ENCODE measurements at regions of chr19 and their contacts with region 1.

Region 1: GRCh38 chr19:6801485-6802086 is 29.1 kb downstream of the VAV1 start:
- DNase-seq: peak; percentile 54 to 96 (median 87)
- ATAC-seq: peak; percentile 78
- H3K4me3 ChIP-seq: peak overlapping the region; percentile 71 to 79
- H3K4me3 Mint-ChIP-seq: peak overlapping the region; percentile 87
- H3K27ac ChIP-seq: peak overlapping the region; percentile 74 to 91
- H3K27ac Mint-ChIP-seq: peak overlapping the region; percentile 95
- H3K4me1 ChIP-seq: peaks cover 48% of the 10 kb centered on the region
- H3K4me1 Mint-ChIP-seq: peaks cover 68% of the 10 kb centered on the region
- H3K27me3 ChIP-seq: no peaks in the 10 kb centered on the region
- H3K27me3 Mint-ChIP-seq: no peaks in the 10 kb centered on the region
- CTCF ChIP-seq: no peak

Region 2: DNA sequence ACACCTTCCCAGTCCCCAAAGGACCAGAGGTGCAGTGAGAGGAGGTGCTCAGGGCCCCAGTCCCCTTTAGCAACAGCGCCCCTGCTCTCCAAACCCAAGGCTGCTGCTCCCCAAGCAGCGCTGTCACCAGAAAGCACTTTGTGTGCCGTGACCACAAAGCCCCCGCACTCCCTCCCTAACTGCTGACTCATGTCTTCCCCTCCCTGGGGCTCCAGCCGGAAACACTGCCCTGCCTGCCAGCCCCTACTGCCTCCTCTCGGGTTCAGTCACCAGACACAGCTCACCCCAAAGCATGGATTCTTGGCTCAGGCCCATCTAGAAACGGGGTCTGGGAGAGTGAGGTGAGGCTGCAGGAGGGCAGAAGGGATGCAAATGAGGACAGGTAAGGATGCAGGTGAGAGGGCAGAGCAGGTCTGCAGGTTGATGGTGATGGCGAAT is 126.7 kb before region 1 on chr19:
- CTCF ChIA-PET with region 1: no interaction called
- POLR2A ChIA-PET with region 1: no interaction called
- intact Hi-C with region 1: loop called in 1 of 2 experiments (anchors 1 kb)
- DNase-seq: peak; percentile 56 to 93 (median 86)
- ATAC-seq: peak; percentile 67
- H3K4me3 ChIP-seq: peak overlapping the region in 1 of 2 experiments; percentile 31
- H3K4me3 Mint-ChIP-seq: peak overlapping the region; percentile 50
- H3K27ac ChIP-seq: peak overlapping the region in 1 of 2 experiments; percentile 6
- H3K27ac Mint-ChIP-seq: peak overlapping the region; percentile 84
- H3K4me1 ChIP-seq: peaks cover 33% of the 10 kb centered on the region
- H3K4me1 Mint-ChIP-seq: peaks cover 45% of the 10 kb centered on the region
- H3K27me3 ChIP-seq: no peaks in the 10 kb centered on the region
- H3K27me3 Mint-ChIP-seq: no peaks in the 10 kb centered on the region
- CTCF ChIP-seq: no peak

Region 3: GRCh38 chr19:6753178-6754031 is 48.2 kb before region 1 on chr19:
- CTCF ChIA-PET with region 1: no interaction called
- POLR2A ChIA-PET with region 1: no interaction called
- intact Hi-C with region 1: loop called in 1 of 2 experiments (anchors 2 kb)
- DNase-seq: peak; percentile 51 to 89 (median 73)
- ATAC-seq: peak; percentile 90
- H3K4me3 ChIP-seq: peak overlapping the region; percentile 42 to 59
- H3K4me3 Mint-ChIP-seq: peak overlapping the region; percentile 76
- H3K27ac ChIP-seq: peak overlapping the region; percentile 35 to 40
- H3K27ac Mint-ChIP-seq: peak overlapping the region; percentile 81
- H3K4me1 ChIP-seq: peaks cover 4% of the 10 kb centered on the region
- H3K4me1 Mint-ChIP-seq: peaks cover 12% of the 10 kb centered on the region
- H3K27me3 ChIP-seq: no peaks in the 10 kb centered on the region
- H3K27me3 Mint-ChIP-seq: no peaks in the 10 kb centered on the region
- CTCF ChIP-seq: peak; percentile 47

Region 4: GRCh38 chr19:6773323-6773931 is 28.2 kb before region 1 on chr19:
- CTCF ChIA-PET with region 1: interaction called, 4 read pairs
- POLR2A ChIA-PET with region 1: interaction called, 36 read pairs
- intact Hi-C with region 1: loop called (anchors 1 kb)
- DNase-seq: peak in 8 of 9 experiments; percentile 31 to 75 (median 56)
- ATAC-seq: peak; percentile 29
- H3K4me3 ChIP-seq: peak overlapping the region; percentile 99 to 100
- H3K4me3 Mint-ChIP-seq: peak overlapping the region; percentile 87
- H3K27ac ChIP-seq: peak overlapping the region; percentile 84 to 87
- H3K27ac Mint-ChIP-seq: peak overlapping the region; percentile 94
- H3K4me1 ChIP-seq: peaks cover 36% of the 10 kb centered on the region
- H3K4me1 Mint-ChIP-seq: peaks cover 55% of the 10 kb centered on the region
- H3K27me3 ChIP-seq: no peaks in the 10 kb centered on the region
- H3K27me3 Mint-ChIP-seq: no peaks in the 10 kb centered on the region
- CTCF ChIP-seq: no peak

Region 5: GRCh38 chr19:6790194-6791128 is 11.1 kb before region 1 on chr19:
- CTCF ChIA-PET with region 1: interaction called, 6 read pairs
- POLR2A ChIA-PET with region 1: interaction called, 11 read pairs
- intact Hi-C with region 1: no loop called
- DNase-seq: no peak
- ATAC-seq: no peak
- H3K4me3 ChIP-seq: no peak overlapping the region
- H3K4me3 Mint-ChIP-seq: peak overlapping the region; percentile 47
- H3K27ac ChIP-seq: no peak overlapping the region
- H3K27ac Mint-ChIP-seq: peak overlapping the region; percentile 85
- H3K4me1 ChIP-seq: peaks cover 45% of the 10 kb centered on the region
- H3K4me1 Mint-ChIP-seq: peaks cover 71% of the 10 kb centered on the region
- H3K27me3 ChIP-seq: no peaks in the 10 kb centered on the region
- H3K27me3 Mint-ChIP-seq: no peaks in the 10 kb centered on the region
- CTCF ChIP-seq: no peak

Region 6: DNA sequence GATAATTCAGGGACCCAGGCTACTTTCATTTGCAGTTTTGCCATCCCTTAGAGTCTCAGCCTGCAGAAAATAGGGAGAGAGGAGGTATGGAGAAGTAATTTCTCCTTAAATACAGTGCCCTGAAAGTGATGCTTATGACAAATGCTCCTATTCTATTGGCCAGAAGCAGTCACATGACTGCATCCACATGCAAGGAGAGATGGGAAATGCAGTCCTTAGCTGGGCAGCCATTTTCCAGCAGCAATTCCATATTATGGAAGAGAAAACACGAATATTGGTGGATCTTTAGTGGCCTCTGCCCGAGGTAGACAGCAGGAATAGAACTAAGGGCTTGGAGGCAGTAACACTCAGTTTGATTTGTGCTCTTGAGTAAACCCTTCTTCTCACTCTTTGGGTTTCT is 10.3 kb after region 1 on chr19:
- CTCF ChIA-PET with region 1: interaction called, 11 read pairs
- POLR2A ChIA-PET with region 1: interaction called, 18 read pairs
- intact Hi-C with region 1: no loop called
- DNase-seq: peak in 2 of 9 experiments; percentile 50 to 63
- ATAC-seq: peak; percentile 29
- H3K4me3 ChIP-seq: no peak overlapping the region
- H3K4me3 Mint-ChIP-seq: no peak overlapping the region
- H3K27ac ChIP-seq: no peak overlapping the region
- H3K27ac Mint-ChIP-seq: peak overlapping the region; percentile 72
- H3K4me1 ChIP-seq: peaks cover 46% of the 10 kb centered on the region
- H3K4me1 Mint-ChIP-seq: peaks cover 77% of the 10 kb centered on the region
- H3K27me3 ChIP-seq: no peaks in the 10 kb centered on the region
- H3K27me3 Mint-ChIP-seq: no peaks in the 10 kb centered on the region
- CTCF ChIP-seq: no peak